Activated CD8-positive, alpha-beta T cell treated with anti-CD3 and anti-CD28 coated beads, Interleukin-2, amount 10 ng/mL, durations not matched to agents 7 days and 5 days (primary cell): ENCODE measurements at regions of chr1 and their contacts with region 1.

Region 1: GRCh38 chr1:209674957-209675564 is at the start of gene G0S2:
- DNase-seq: peak; percentile 42
- ATAC-seq: peak; percentile 58
- H3K4me3 Mint-ChIP-seq: peak within 1 kb of the TSS; percentile 57
- H3K27ac Mint-ChIP-seq: no peak within 1 kb of the TSS
- H3K4me1 Mint-ChIP-seq: peaks cover 54% of the 10 kb centered on the region
- H3K27me3 Mint-ChIP-seq: peaks cover 42% of the 10 kb centered on the region
- total RNA-seq, gene G0S2: not detected

Region 2: GRCh38 chr1:209428241-209428921 is 246.7 kb before region 1 on chr1:
- CTCF ChIA-PET with region 1: no interaction called
- POLR2A ChIA-PET with region 1: no interaction called
- DNase-seq: no peak
- ATAC-seq: no peak
- H3K4me3 Mint-ChIP-seq: no peak overlapping the region
- H3K27ac Mint-ChIP-seq: no peak overlapping the region
- H3K4me1 Mint-ChIP-seq: peaks cover 6% of the 10 kb centered on the region
- H3K27me3 Mint-ChIP-seq: peaks cover 4% of the 10 kb centered on the region

Region 3: DNA sequence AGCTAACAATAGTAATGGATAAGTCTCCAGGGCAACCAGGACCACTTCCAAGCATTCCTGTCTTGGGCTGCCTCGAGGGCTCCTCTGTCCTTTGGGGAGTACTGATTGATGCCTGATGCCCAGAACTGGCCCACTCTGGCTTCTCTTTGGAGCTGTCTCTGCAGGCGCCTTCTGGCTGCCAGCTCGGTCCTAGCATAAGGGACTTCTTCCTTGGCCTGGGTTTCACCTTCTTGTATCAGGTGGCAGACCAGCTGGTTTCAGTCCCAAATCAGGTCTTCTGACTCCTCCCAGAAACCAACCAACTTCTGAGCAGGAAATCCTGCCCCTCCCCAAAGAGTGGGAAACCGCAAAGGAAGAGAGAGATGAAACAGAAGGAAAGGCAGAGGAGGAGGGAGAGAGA is 10.8 kb after region 1 on chr1:
- CTCF ChIA-PET with region 1: interaction called, 15 read pairs
- POLR2A ChIA-PET with region 1: interaction called, 4 read pairs
- DNase-seq: peak; percentile 53
- ATAC-seq: peak; percentile 69
- H3K4me3 Mint-ChIP-seq: peak overlapping the region; percentile 45
- H3K27ac Mint-ChIP-seq: peak overlapping the region; percentile 43
- H3K4me1 Mint-ChIP-seq: peaks cover 30% of the 10 kb centered on the region
- H3K27me3 Mint-ChIP-seq: peaks cover 23% of the 10 kb centered on the region